HepG2 (cell line): ENCODE measurements at regions of chr21 and their contacts with region 1.

Region 1: DNA sequence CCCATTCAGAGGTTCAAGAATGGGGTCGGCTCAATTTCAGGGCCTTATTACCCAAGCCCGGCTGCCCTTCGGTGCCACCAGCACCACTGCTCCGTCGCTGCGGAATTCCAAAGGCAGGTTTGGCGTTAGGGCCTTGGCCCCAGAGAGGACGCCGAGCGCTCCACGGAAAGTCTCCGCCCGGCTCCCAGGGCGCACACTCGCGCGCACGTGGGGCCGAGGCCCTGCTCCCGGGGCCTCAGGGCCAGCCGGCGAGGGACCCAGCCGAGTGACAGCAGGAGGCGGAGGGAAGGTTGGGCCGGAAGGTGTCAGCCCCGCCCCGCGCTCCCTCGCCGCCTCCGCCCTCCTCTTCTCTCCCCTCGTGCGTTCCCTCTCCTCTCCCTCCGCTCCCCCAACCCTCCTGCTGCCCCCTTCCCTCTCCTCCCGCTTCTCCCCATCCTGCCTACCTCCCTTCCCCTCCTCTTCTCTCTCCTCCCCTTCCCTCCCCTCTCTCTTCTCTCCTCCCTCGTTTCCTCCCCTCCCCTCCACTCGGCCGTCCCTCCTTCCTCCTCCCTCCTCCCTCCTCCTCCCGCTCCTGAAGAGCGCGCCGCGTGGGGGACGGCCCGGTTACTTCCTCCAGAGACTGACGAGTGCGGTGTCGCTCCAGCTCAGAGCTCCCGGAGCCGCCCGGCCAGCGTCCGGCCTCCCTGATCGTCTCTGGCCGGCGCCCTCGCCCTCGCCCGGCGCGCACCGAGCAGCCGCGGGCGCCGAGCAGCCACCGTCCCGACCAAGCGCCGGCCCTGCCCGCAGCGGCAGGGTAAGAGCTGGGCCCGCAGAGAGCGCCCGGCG is at the start of gene ETS2:
- DNase-seq: peak; percentile 84
- ATAC-seq: peak; percentile 86
- H3K4me3 ChIP-seq: peak within 1 kb of the TSS; percentile 88 to 98 (median 96)
- H3K27ac ChIP-seq: peak within 1 kb of the TSS; percentile 75
- H3K4me1 ChIP-seq: peaks cover 78% of the 10 kb centered on the region
- H3K27me3 ChIP-seq: no peaks in the 10 kb centered on the region; a peak in 1 of 5 replicates
- CTCF ChIP-seq: peak; percentile 24; the same call in 1 of the 2 replicates
- EP300 ChIP-seq: no peak
- POLR2A ChIP-seq: peak; percentile 78 to 95
- RAD21 ChIP-seq: peak; percentile 26; the same call in 1 of the 2 replicates
- total RNA-seq, gene ETS2: 24.6 and 28.2 TPM in 2 replicates

Region 2: GRCh38 chr21:38733973-38734546 is 71.5 kb before region 1 on chr21:
- CTCF ChIA-PET with region 1: no interaction called
- POLR2A ChIA-PET with region 1: no interaction called
- in situ Hi-C with region 1: no loop called
- intact Hi-C with region 1: loop called (anchors 2 kb)
- DNase-seq: peak; percentile 61
- ATAC-seq: peak; percentile 85
- H3K4me3 ChIP-seq: no peak overlapping the region
- H3K27ac ChIP-seq: no peak overlapping the region
- H3K4me1 ChIP-seq: peaks cover 31% of the 10 kb centered on the region
- H3K27me3 ChIP-seq: no peaks in the 10 kb centered on the region
- CTCF ChIP-seq: peak; percentile 96
- EP300 ChIP-seq: no peak
- POLR2A ChIP-seq: no peak
- RAD21 ChIP-seq: peak; percentile 92

Region 3: DNA sequence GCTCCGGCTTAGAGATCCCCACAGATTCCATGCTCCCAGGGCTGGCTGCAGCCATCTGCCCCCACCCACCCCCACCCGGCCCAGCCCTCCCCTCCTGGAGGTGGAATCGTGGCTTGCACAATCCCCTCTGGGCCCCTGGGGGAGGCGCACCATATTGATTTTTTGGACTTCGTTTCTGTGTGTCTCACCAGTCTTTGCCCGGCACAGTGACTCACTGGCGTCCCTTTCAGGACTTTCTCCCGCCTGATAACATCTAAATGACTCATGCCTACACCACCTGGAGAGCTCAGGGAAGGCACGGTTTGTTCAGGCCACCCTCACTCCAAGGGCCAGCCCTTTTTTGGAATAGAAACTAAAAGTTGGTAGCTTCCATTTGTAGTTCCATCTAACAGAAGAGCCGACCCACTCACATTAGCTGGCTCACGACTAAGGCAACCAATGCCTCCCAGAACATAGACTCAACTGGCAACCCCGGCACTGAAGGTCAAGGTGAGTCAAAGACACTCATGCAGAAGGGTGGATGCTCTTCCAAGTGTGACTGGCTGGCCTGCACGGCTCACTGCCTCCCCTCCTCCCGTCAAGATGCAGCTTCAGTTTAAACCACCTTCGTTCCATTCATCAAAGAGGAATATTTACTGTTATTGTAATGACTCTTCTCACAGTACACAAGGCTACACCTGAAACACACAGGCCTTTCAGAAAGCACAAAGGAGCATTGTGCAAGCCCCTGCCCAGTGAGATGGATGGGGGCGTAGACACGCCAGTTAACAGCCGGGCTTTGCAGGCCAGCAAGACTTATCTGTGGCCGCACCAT is 17.9 kb before region 1 on chr21:
- CTCF ChIA-PET with region 1: no interaction called
- POLR2A ChIA-PET with region 1: interaction called, 33 read pairs
- in situ Hi-C with region 1: no loop called
- intact Hi-C with region 1: no loop called
- DNase-seq: peak; percentile 99
- ATAC-seq: peak; percentile 98
- H3K4me3 ChIP-seq: peak overlapping the region; percentile 4 to 56 (median 48); a peak in 5 of 6 replicates
- H3K27ac ChIP-seq: peak overlapping the region; percentile 97
- H3K4me1 ChIP-seq: peaks cover 65% of the 10 kb centered on the region
- H3K27me3 ChIP-seq: no peaks in the 10 kb centered on the region
- CTCF ChIP-seq: peak; percentile 46
- EP300 ChIP-seq: peak; percentile 87 to 96
- POLR2A ChIP-seq: peak; percentile 66 to 72
- RAD21 ChIP-seq: no peak; the same call in 1 of the 2 replicates

Region 4: GRCh38 chr21:38965909-38966504 is 160.5 kb after region 1 on chr21:
- CTCF ChIA-PET with region 1: no interaction called
- POLR2A ChIA-PET with region 1: interaction called, 10 read pairs
- in situ Hi-C with region 1: no loop called
- intact Hi-C with region 1: no loop called
- DNase-seq: peak; percentile 94
- ATAC-seq: peak; percentile 97
- H3K4me3 ChIP-seq: peak overlapping the region; percentile 2 to 19 (median 14); a peak in 4 of 6 replicates
- H3K27ac ChIP-seq: peak overlapping the region; percentile 74
- H3K4me1 ChIP-seq: peaks cover 58% of the 10 kb centered on the region
- H3K27me3 ChIP-seq: no peaks in the 10 kb centered on the region
- CTCF ChIP-seq: peak; percentile 15; the same call in 1 of the 2 replicates
- EP300 ChIP-seq: peak in 1 of 2 experiments; percentile 82; a peak in 2 of 4 replicates
- POLR2A ChIP-seq: peak; percentile 65 to 89
- RAD21 ChIP-seq: no peak

Region 5: DNA sequence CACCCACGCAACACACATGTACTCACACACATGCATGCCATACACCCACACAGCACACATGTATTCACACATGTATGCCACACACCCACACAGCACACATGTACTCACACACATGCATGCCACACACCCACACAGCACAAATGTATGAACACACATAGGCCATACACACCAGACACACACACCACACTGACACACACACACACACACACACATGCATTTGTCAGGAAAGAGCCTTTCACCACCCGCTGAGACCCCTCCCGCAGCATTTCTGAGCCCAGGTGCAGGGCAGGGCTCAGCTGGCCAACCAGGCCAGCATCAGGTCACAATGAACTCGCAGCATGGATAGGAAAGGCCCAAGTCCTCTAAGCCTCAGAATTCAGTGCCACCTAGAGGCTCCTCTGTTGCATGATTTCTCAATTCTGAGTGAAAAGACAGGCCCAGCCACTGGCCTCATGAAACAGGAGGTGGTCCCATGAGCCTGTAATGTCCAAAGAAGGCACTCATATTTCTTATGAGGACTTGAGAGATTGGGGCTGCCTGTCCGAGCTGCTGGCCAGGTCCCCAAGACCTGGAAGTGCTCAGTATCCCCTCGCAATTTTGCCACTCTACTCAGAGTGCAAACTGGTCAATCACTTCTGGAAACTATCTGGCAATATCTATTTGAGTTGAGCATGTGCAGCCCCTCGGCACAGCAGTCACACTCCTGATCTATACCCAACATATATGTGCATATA is 320.4 kb after region 1 on chr21:
- CTCF ChIA-PET with region 1: no interaction called
- POLR2A ChIA-PET with region 1: no interaction called
- in situ Hi-C with region 1: loop called (anchors 10 kb)
- intact Hi-C with region 1: loop called (anchors 10 kb)
- DNase-seq: peak; percentile 80
- ATAC-seq: peak; percentile 99
- H3K4me3 ChIP-seq: no peak overlapping the region
- H3K27ac ChIP-seq: no peak overlapping the region
- H3K4me1 ChIP-seq: peaks cover 33% of the 10 kb centered on the region
- H3K27me3 ChIP-seq: no peaks in the 10 kb centered on the region
- CTCF ChIP-seq: peak; percentile 92
- EP300 ChIP-seq: peak in 1 of 2 experiments; percentile 31; a peak in 1 of 4 replicates
- POLR2A ChIP-seq: no peak
- RAD21 ChIP-seq: peak; percentile 79